A673 (cell line): ENCODE measurements at regions of chr18 and their contacts with region 1.

Region 1: GRCh38 chr18:75896865-75897264 is 469.4 kb upstream of the SMIM21 start:
- DNase-seq: no peak
- H3K4me3 ChIP-seq: no peak overlapping the region
- H3K27ac ChIP-seq: no peak overlapping the region
- H3K4me1 ChIP-seq: no peaks in the 10 kb centered on the region
- H3K27me3 ChIP-seq: no peaks in the 10 kb centered on the region
- CTCF ChIP-seq: no peak

Region 2: DNA sequence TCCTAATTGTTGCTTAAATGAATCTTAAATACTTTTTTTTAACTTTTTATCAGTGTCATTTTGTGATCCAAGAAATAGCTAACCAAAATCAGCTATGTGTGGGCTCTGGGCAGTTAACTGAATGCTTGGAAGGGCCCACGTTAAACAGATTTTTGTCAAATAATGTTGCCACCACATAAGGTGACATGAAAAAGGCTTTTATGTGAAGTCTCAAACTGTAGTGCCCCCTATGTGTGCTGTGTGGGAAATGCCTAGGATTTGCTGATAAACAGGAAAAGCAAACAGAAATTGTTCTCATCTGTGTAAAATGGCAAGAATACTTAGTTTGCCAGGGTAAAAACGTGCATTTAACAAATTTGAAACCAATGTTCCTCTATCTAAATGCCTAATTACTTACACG is 356.0 kb after region 1 on chr18:
- CTCF ChIA-PET with region 1: no interaction called
- POLR2A ChIA-PET with region 1: no interaction called
- intact Hi-C with region 1: loop called (anchors 10 kb)
- DNase-seq: peak; percentile 38
- H3K4me3 ChIP-seq: no peak overlapping the region
- H3K27ac ChIP-seq: no peak overlapping the region
- H3K4me1 ChIP-seq: no peaks in the 10 kb centered on the region
- H3K27me3 ChIP-seq: peaks cover 11% of the 10 kb centered on the region
- CTCF ChIP-seq: peak; percentile 69